ENCODE measurements at regions of chr3 and their contacts with region 1.

Region 1: GRCh38 chr3:63961891-63962290 is 49.7 kb upstream of the SCAANT1 start:
- DNase-seq: no peak
- H3K4me3 ChIP-seq: no peak overlapping the region
- H3K27ac ChIP-seq: no peak overlapping the region
- H3K4me1 ChIP-seq: peaks cover 4 to 18% (median 9%) of the 10 kb centered on the region in 4 experiments; a peak in 6 of 7 replicates
- H3K27me3 ChIP-seq: no peaks in the 10 kb centered on the region
- CTCF ChIP-seq: peak in 2 of 3 experiments; percentile 26 to 64; a peak in 2 of 4 replicates
- EP300 ChIP-seq: no peak
- POLR2A ChIP-seq: no peak
- RAD21 ChIP-seq: peak; percentile 25 to 49; a peak in 3 of 4 replicates

Region 2: DNA sequence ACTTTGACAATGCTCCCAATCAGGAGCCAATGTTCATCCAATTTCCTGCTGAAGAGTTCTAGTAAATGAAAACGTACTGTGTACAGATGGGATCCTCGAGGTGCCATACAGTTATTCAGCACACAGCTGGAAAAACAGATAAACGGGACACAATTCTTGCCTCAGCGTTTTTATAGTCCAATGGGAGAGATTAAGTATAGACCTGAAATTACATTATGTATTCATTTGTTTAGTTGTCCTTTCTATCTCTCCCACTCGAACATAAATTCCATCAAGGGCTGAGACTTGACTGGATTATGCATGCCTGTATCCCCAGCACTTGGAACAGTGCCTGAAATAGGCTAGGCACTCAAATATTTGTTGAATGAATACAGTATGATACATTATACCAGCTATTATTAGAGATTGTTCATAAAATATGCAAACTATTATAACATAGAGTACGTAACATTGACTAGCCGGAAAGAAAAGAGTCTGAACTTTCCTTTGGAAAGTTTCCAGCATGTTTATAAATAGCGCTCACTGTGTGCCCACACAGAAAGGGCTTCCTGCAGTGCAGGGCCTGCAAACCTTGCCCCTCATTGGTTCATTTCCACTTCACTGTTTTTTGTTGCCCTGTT is 336.8 kb before region 1 on chr3:
- CTCF ChIA-PET with region 1: no interaction called
- POLR2A ChIA-PET with region 1: no interaction called
- DNase-seq: no peak
- H3K4me3 ChIP-seq: no peak overlapping the region
- H3K27ac ChIP-seq: no peak overlapping the region
- H3K4me1 ChIP-seq: peaks cover 0 to 12% (median 9%) of the 10 kb centered on the region in 4 experiments; a peak in 5 of 7 replicates
- H3K27me3 ChIP-seq: no peaks in the 10 kb centered on the region
- CTCF ChIP-seq: no peak
- EP300 ChIP-seq: no peak
- POLR2A ChIP-seq: no peak
- RAD21 ChIP-seq: no peak

Region 3: DNA sequence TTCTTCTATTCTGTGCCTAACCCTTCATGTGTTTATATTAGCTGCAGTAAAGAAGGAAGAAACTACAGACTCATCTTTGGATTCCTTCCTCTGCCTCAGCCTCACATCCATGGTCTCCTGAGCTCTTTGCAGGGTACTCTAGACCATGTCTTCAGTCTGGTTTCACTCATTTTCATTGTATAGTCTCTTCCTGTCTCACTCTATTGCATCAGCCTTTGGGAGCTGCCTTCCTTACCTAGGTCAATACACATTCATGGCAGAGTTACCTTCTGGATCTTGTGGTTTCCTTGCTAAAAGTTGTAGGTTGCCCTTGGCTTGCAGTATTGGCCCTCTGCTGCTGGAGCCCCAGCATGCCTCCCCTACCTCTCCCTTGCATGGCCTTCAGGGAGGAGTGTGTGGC is 18.2 kb before region 1 on chr3:
- CTCF ChIA-PET with region 1: interaction called, 23 read pairs
- POLR2A ChIA-PET with region 1: no interaction called
- DNase-seq: no peak
- H3K4me3 ChIP-seq: no peak overlapping the region
- H3K27ac ChIP-seq: no peak overlapping the region
- H3K4me1 ChIP-seq: no peaks in the 10 kb centered on the region; a peak in 1 of 7 replicates
- H3K27me3 ChIP-seq: no peaks in the 10 kb centered on the region
- CTCF ChIP-seq: no peak
- EP300 ChIP-seq: no peak
- POLR2A ChIP-seq: no peak
- RAD21 ChIP-seq: no peak

Region 4: DNA sequence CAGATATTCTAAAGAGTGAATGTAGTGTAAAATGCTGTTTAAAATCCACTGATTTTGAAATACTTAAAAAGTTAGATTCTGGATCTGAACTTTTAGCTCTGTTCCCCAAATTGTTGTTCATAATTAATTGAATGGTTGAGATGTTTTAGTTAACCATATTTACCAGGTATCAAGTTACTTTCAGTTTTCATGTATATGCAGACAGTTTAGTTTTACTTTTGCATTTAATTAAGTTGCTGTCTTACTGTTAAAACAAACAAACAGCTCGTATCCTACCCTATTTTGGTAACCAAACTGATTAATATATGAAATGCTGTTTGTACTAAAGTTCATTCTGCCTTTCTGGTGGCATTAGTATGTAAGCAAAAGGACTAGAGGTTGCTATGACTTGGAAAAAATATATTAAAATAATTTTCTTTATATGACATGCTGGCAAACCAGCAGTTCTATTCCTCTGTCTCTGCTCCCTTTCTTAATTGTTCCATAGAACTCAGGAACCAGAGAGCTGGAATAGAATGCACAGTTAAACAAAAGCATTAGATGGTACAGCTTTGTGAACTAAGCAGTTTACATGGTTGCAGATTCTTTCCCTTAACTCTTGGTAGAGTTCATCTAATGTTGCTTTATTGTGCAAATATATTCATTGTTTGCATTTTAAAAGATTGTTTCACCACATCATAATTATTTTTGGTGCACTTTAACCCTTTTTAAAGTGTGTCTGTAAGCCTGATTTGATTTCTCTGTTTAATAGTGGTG is 10.2 kb before region 1 on chr3:
- CTCF ChIA-PET with region 1: interaction called, 23 read pairs
- POLR2A ChIA-PET with region 1: no interaction called
- DNase-seq: no peak
- H3K4me3 ChIP-seq: no peak overlapping the region
- H3K27ac ChIP-seq: no peak overlapping the region
- H3K4me1 ChIP-seq: peaks cover 0 to 14% (median 9%) of the 10 kb centered on the region in 4 experiments; a peak in 4 of 7 replicates
- H3K27me3 ChIP-seq: no peaks in the 10 kb centered on the region
- CTCF ChIP-seq: no peak
- EP300 ChIP-seq: no peak
- POLR2A ChIP-seq: no peak
- RAD21 ChIP-seq: no peak

Region 5: GRCh38 chr3:63975723-63976122 is 13.8 kb after region 1 on chr3:
- CTCF ChIA-PET with region 1: interaction called, 29 read pairs
- POLR2A ChIA-PET with region 1: interaction called, 4 read pairs
- DNase-seq: no peak
- H3K4me3 ChIP-seq: no peak overlapping the region
- H3K27ac ChIP-seq: no peak overlapping the region
- H3K4me1 ChIP-seq: peaks cover 4 to 14% (median 7%) of the 10 kb centered on the region in 4 experiments
- H3K27me3 ChIP-seq: no peaks in the 10 kb centered on the region
- CTCF ChIP-seq: no peak
- EP300 ChIP-seq: no peak
- POLR2A ChIP-seq: no peak
- RAD21 ChIP-seq: no peak

Region 6: DNA sequence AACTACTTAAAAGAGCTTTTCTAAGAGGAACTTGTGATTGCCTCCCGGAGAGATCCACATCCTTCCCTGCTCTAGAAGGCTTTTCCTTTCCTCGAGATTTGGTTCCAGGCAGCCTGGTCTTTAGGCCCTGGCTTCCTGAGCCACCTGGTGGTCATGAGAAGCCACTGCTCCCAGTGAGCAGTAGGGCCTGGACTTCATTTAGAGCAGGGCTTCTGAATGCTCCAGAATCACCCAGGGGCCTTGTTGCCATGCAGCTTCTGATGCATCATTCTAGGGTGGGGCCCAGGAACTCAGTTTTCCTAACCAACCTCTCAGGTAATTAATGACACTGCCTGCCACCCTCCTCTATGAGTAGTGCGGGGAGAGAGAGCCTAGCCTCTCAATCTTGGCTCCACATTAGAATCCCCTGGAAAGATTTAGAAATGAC is 31.8 kb after region 1 on chr3:
- CTCF ChIA-PET with region 1: interaction called, 115 read pairs
- POLR2A ChIA-PET with region 1: no interaction called
- DNase-seq: peak; percentile 47 to 61
- H3K4me3 ChIP-seq: no peak overlapping the region
- H3K27ac ChIP-seq: no peak overlapping the region
- H3K4me1 ChIP-seq: no peaks in the 10 kb centered on the region
- H3K27me3 ChIP-seq: no peaks in the 10 kb centered on the region
- CTCF ChIP-seq: peak; percentile 80 to 95 (median 90)
- EP300 ChIP-seq: no peak
- POLR2A ChIP-seq: no peak
- RAD21 ChIP-seq: peak; percentile 91 to 94